Activated CD4-positive, alpha-beta memory T cell treated with anti-CD3 and anti-CD28 coated beads, Interleukin-2, amount 10 ng/mL, durations not matched to agents 7 days and 5 days (primary cell): ENCODE measurements at regions of chr10 and their contacts with region 1.

Region 1: DNA sequence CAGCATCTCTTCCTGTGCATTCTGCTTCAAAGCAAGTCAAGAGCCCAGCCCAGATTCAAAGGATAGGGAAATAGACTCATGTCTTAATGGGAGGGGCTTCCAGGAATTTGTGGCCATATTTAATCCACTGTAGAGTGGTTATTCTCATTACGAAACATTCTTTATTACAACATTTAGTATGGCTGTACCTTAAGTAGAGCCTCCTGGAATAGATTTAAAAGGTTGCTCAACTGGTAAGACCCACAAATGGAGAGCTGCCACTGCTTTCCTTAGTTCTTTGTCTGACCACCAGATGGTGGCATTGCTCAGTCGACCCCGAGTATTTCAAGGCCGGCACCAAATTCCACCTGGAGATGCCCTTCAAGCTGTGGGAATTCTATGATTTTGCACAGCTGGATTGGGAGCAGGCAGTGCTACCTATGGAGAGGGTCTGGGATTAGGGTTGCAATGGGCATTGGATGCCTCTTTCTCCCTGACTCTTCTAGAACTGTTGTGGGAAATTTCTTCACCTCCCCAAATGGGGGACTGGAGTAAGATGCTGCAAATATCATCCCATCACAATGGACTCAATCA is 102.2 kb downstream of the RBM20 start:
- DNase-seq: peak; percentile 51
- H3K4me3 Mint-ChIP-seq: no peak overlapping the region
- H3K27ac Mint-ChIP-seq: no peak overlapping the region
- H3K4me1 Mint-ChIP-seq: peaks cover 36% of the 10 kb centered on the region
- H3K27me3 Mint-ChIP-seq: no peaks in the 10 kb centered on the region

Region 2: GRCh38 chr10:110780704-110781103 is 34.4 kb after region 1 on chr10:
- CTCF ChIA-PET with region 1: no interaction called
- POLR2A ChIA-PET with region 1: no interaction called
- DNase-seq: no peak
- H3K4me3 Mint-ChIP-seq: no peak overlapping the region
- H3K27ac Mint-ChIP-seq: no peak overlapping the region
- H3K4me1 Mint-ChIP-seq: peaks cover 23% of the 10 kb centered on the region
- H3K27me3 Mint-ChIP-seq: peaks cover 2% of the 10 kb centered on the region

Region 3: DNA sequence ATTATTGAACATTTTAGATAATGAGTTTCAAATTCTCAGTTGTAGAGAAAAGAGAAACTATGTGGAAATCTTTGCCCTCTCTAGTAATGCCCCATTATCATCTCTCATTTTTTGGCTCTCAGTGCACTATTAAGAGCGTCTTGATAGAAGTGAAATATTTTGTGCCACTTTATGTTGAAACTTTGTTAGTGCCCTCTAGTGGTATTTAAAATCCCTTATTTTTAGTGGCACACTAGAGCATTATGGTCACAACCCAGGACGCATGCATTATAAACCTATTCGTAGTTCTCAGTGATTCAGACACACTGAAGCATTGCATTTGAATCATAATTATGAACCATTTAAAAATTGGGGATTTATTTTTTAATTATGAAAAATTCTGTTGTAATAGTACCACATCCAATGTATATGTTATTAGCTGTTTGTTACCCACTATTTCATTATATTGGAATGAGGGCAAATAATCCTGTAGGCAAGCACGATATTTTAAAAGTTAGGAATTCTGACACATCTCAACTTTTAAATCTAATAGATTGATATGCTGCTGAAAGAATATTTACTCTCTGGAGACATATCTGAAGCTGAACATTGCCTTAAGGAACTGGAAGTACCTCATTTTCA is 147.3 kb after region 1 on chr10:
- CTCF ChIA-PET with region 1: interaction called, 27 read pairs
- POLR2A ChIA-PET with region 1: no interaction called
- DNase-seq: no peak
- H3K4me3 Mint-ChIP-seq: no peak overlapping the region
- H3K27ac Mint-ChIP-seq: no peak overlapping the region
- H3K4me1 Mint-ChIP-seq: peaks cover 5% of the 10 kb centered on the region
- H3K27me3 Mint-ChIP-seq: no peaks in the 10 kb centered on the region